PC-3 (cell line): ENCODE measurements at regions of chr7 and their contacts with region 1.

Region 1: GRCh38 chr7:84529480-84530205 is 335.1 kb upstream of the SEMA3A start:
- DNase-seq: peak; percentile 89
- ATAC-seq: peak; percentile 87
- H3K4me3 ChIP-seq: no peak overlapping the region
- H3K27ac ChIP-seq: peak overlapping the region; percentile 16
- H3K4me1 ChIP-seq: peaks cover 22% of the 10 kb centered on the region
- H3K27me3 ChIP-seq: no peaks in the 10 kb centered on the region
- CTCF ChIP-seq: no peak

Region 2: DNA sequence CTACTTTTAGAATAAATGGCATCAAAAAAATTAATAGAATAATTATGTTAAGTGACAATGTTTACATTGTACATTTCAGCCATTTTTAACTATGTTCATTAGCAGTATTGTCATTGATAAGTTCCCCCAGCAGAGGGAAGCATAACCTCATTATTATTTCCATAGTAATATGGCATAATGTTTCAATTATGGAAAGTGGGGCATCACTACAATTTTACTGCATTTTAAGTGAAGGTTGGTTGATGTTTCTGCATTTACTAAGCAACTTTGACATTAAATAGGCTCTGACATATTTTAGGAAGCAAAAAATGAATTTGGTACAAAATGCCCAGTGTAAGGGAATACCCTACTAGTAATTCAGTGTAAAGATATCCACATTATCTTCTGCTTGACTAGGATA is 553.3 kb before region 1 on chr7:
- CTCF ChIA-PET with region 1: no interaction called
- POLR2A ChIA-PET with region 1: no interaction called
- intact Hi-C with region 1: loop called (anchors 5 kb)
- DNase-seq: peak; percentile 74
- ATAC-seq: peak; percentile 56
- H3K4me3 ChIP-seq: no peak overlapping the region
- H3K27ac ChIP-seq: peak overlapping the region; percentile 29
- H3K4me1 ChIP-seq: no peaks in the 10 kb centered on the region
- H3K27me3 ChIP-seq: no peaks in the 10 kb centered on the region
- CTCF ChIP-seq: peak; percentile 83

Region 3: GRCh38 chr7:84188786-84189405 is 340.7 kb before region 1 on chr7:
- CTCF ChIA-PET with region 1: no interaction called
- POLR2A ChIA-PET with region 1: no interaction called
- intact Hi-C with region 1: loop called (anchors 2 kb)
- DNase-seq: peak; percentile 63
- ATAC-seq: peak; percentile 16; the same call in 1 of the 2 replicates
- H3K4me3 ChIP-seq: peak overlapping the region; percentile 55
- H3K27ac ChIP-seq: peak overlapping the region; percentile 94
- H3K4me1 ChIP-seq: peaks cover 56% of the 10 kb centered on the region
- H3K27me3 ChIP-seq: no peaks in the 10 kb centered on the region
- CTCF ChIP-seq: peak; percentile 80

Region 4: DNA sequence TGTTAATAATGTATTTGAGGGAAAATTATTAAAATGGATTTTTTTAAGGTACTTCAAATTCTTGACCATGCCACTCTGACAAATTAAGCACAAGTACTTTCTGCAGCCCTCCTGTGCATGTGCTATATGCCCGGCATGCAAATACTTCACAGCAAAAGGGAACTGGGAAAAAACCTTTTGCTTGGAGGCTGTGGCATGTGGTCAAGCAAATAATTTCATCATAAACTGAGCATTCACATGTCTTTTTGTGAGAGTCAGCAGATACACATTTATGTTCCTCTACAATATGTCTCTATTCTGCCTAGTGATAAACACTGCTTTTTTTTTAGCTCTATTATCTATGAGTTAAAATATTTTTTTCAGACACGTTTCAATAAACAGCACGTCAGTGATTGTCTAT is 281.4 kb before region 1 on chr7:
- CTCF ChIA-PET with region 1: no interaction called
- POLR2A ChIA-PET with region 1: no interaction called
- intact Hi-C with region 1: loop called (anchors 1 kb)
- DNase-seq: no peak
- ATAC-seq: no peak
- H3K4me3 ChIP-seq: no peak overlapping the region
- H3K27ac ChIP-seq: peak overlapping the region; percentile 72; the same call in 1 of the 2 replicates
- H3K4me1 ChIP-seq: peaks cover 32% of the 10 kb centered on the region
- H3K27me3 ChIP-seq: no peaks in the 10 kb centered on the region
- CTCF ChIP-seq: no peak

Region 5: GRCh38 chr7:84364708-84365107 is 164.9 kb before region 1 on chr7:
- CTCF ChIA-PET with region 1: no interaction called
- POLR2A ChIA-PET with region 1: no interaction called
- intact Hi-C with region 1: loop called (anchors 10 kb)
- DNase-seq: peak; percentile 23
- ATAC-seq: peak; percentile 31
- H3K4me3 ChIP-seq: no peak overlapping the region
- H3K27ac ChIP-seq: no peak overlapping the region
- H3K4me1 ChIP-seq: peaks cover 18% of the 10 kb centered on the region
- H3K27me3 ChIP-seq: no peaks in the 10 kb centered on the region
- CTCF ChIP-seq: no peak

Region 6: DNA sequence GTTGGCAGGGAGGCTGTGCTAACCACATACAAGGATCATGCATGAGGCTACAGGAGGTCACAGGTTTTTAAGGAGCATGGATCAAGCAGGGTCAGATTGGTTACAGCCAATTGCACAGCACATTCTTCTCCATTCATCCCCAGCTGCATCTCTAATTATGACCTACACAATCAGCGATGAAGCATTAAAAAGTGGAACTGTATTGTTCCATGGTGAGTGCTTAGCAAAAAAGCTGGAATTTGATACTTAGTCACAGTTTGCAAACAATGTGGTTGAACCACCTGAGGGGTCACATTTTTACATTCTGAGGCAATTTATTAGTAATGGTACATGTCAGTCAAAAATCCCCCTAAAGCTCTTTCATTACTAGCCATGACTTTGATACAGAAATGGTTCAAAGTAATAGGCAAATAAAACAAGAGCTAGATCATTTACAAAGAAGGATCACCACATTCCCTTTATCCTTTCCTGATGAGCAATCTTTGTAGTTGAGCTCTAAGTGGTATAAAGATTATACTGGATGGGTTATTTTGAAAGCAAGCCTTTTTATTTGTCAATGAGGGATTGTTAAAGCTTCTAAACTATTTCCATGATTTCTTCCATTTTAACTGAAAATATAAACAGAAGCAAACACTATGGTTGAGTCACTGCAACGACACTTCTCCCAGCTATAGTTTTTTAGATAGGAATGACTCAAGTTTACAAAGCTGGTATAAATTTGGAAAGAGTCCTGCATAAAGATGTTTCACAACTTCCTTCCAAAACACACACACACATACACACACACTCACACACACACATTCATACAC is 117.3 kb before region 1 on chr7:
- CTCF ChIA-PET with region 1: no interaction called
- POLR2A ChIA-PET with region 1: no interaction called
- intact Hi-C with region 1: loop called (anchors 1 kb)
- DNase-seq: peak; percentile 96
- ATAC-seq: peak; percentile 91
- H3K4me3 ChIP-seq: peak overlapping the region; percentile 43; the same call in 1 of the 2 replicates
- H3K27ac ChIP-seq: peak overlapping the region; percentile 98
- H3K4me1 ChIP-seq: peaks cover 31% of the 10 kb centered on the region
- H3K27me3 ChIP-seq: no peaks in the 10 kb centered on the region
- CTCF ChIP-seq: no peak

Region 7: DNA sequence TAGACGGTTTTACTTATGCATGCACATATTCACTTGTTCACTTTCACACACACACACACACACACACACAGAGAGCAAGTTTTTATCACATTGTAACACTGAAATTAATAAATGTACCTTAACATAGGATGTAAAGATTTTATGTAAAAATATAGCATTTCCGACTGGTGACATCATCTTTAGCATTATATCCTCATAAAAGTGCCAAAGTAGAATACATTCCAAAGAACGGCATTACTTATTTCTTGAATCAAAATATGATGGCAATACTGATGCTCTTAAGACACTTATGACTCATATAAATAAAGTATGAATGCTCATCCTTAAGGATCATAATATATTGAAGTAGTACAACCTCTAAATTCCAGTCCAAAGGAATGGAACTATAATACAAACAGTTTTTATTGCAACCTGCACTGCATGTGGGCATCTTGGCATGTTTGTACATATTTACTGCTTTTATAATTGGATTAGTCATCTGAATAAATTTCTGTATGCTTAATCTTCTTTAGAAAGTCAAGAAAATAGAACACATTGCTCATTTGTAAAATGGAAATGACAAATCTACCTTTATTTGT is 45.1 kb before region 1 on chr7:
- CTCF ChIA-PET with region 1: no interaction called
- POLR2A ChIA-PET with region 1: no interaction called
- intact Hi-C with region 1: loop called (anchors 2 kb)
- DNase-seq: peak; percentile 88
- ATAC-seq: peak; percentile 97
- H3K4me3 ChIP-seq: no peak overlapping the region
- H3K27ac ChIP-seq: peak overlapping the region; percentile 37
- H3K4me1 ChIP-seq: peaks cover 7% of the 10 kb centered on the region; the same call in 1 of the 2 replicates
- H3K27me3 ChIP-seq: no peaks in the 10 kb centered on the region
- CTCF ChIP-seq: no peak

Region 8: DNA sequence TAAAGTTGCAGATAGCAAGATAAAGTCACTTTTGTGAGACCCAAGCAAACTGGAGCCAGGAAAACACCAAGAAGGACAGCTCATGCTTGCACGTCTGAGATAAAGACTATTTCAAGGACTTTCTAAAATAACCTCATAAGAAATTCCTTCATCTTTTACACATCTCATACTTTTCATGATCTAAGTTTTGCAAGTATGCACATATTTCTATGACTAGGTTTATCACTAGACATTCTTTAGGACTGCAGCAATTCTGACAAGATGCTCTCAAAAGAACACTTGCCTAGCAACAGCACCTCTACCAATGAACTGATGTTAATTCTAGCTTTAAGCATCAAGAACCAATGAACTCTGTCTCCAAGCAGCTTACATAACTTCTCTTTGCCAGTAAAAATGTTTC is 199.6 kb after region 1 on chr7:
- CTCF ChIA-PET with region 1: no interaction called
- POLR2A ChIA-PET with region 1: no interaction called
- intact Hi-C with region 1: no loop called
- DNase-seq: no peak
- ATAC-seq: no peak
- H3K4me3 ChIP-seq: no peak overlapping the region
- H3K27ac ChIP-seq: no peak overlapping the region
- H3K4me1 ChIP-seq: no peaks in the 10 kb centered on the region
- H3K27me3 ChIP-seq: no peaks in the 10 kb centered on the region
- CTCF ChIP-seq: no peak